ENCODE measurements at regions of chr1 and their contacts with region 1.

Region 1: DNA sequence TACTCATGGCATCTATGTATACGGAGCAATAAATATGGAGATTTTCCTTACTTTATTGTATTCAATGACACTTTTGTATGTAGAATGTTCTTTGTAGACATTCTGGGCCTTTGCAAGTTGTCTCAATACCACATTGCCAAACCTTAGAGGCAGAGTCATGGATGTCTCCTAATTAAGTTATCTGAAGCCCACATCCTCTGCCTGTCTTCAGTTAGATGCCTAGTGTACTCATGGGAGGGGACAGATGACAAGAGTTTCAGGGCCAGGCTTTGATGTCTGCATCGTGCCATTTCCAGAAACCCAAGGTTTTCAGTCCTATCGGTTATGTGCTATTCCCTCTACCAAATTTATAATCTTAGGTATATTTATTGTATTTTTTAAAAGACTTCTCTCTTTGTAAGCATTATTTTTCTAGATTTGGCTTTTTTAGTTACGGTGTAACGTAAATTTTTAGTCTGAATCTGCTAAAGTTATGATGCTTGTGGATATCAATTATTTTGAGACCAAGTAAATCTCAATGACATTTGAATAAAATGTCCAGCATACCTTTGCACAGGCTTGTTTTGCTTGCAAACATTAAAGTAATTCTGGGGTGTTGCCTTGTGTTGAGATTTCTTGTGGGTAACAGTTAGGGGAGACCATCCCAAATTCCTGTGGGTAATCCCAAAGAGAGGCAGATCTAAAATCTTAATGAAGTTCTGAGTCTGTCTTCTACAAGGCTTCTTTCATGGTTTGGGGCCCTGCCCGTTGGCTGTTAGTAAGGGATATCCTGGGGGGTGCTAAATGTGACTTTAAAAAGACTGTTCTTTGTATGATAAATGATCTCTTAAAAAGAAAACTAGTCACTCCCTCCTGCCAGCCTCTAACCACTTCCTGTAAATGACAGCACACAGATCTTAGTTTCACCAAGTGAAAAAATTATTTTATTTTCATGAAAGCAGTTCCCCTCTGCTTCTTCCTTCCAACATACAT is 8.0 kb upstream of the MACF1 start:
- DNase-seq: no peak
- ATAC-seq: no peak
- H3K4me3 Mint-ChIP-seq: no peak overlapping the region
- H3K27ac Mint-ChIP-seq: 0 out of 2 replicates have a peak overlapping the region, but pooled peaks have one; percentile 49
- H3K4me1 Mint-ChIP-seq: peaks cover 46% of the 10 kb centered on the region
- H3K27me3 Mint-ChIP-seq: no peaks in the 10 kb centered on the region
- CTCF ChIP-seq: no peak

Region 2: GRCh38 chr1:38919130-38919529 is 277.4 kb before region 1 on chr1:
- CTCF ChIA-PET with region 1: no interaction called
- POLR2A ChIA-PET with region 1: no interaction called
- DNase-seq: no peak
- ATAC-seq: no peak
- H3K4me3 Mint-ChIP-seq: no peak overlapping the region
- H3K27ac Mint-ChIP-seq: no peak overlapping the region
- H3K4me1 Mint-ChIP-seq: peaks cover 4% of the 10 kb centered on the region
- H3K27me3 Mint-ChIP-seq: no peaks in the 10 kb centered on the region
- CTCF ChIP-seq: no peak

Region 3: GRCh38 chr1:38990738-38991639 is 205.5 kb before region 1 on chr1 and contains the start of gene AKIRIN1:
- CTCF ChIA-PET with region 1: interaction called, 3 read pairs
- POLR2A ChIA-PET with region 1: interaction called, 12 read pairs
- DNase-seq: peak; percentile 100
- ATAC-seq: peak; percentile 84
- H3K4me3 Mint-ChIP-seq: peak within 1 kb of the TSS; percentile 92
- H3K27ac Mint-ChIP-seq: peak within 1 kb of the TSS; percentile 95
- H3K4me1 Mint-ChIP-seq: peaks cover 54% of the 10 kb centered on the region
- H3K27me3 Mint-ChIP-seq: no peaks in the 10 kb centered on the region
- CTCF ChIP-seq: no peak
- total RNA-seq, gene AKIRIN1: 183 to 214 TPM (median 212 TPM) in 3 replicates

Region 4: DNA sequence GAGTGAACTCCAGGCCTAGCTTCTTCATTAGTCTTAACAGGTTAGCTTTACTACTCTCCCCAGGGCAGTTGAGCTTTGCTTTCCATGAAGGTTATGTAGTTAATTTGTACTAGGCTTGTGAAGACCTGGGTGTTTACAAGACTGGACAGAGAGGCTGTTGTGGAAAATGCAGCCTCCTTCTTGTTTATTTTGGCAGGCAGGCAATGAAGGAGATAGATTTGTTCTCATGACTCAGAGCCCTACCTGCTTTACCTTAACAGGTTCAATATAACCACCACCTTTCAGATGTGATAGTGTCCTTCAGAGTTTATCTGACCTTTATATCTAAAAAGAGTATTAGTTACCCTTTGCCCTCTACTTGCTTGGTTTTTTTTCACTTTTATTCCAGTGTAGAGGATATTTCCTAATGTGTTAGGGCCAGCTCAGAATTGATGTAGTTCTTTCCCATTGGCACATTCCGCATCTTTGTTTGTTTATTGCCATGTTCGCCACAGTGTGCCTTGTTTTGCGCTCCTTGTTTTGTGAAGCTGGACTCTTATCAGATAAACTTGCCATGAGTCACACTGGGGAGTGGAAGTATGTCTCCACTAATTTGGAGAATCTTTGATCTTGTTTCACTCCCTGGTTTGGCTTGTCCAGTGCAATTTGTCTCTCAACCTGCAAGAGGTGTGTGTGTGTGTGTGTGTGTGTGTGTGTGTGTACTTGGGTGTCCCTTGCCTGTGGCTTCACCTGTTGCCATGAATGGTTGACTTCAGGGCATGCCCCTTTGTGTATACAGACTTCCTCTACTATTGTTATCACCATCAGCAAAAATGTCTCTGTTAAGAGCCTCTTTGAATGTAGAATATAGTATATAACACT is 79.4 kb before region 1 on chr1:
- CTCF ChIA-PET with region 1: interaction called, 90 read pairs
- POLR2A ChIA-PET with region 1: interaction called, 3 read pairs
- DNase-seq: no peak
- ATAC-seq: no peak
- H3K4me3 Mint-ChIP-seq: no peak overlapping the region
- H3K27ac Mint-ChIP-seq: peak overlapping the region; percentile 49
- H3K4me1 Mint-ChIP-seq: peaks cover 8% of the 10 kb centered on the region
- H3K27me3 Mint-ChIP-seq: no peaks in the 10 kb centered on the region
- CTCF ChIP-seq: no peak

Region 5: GRCh38 chr1:39165049-39165448 is 31.5 kb before region 1 on chr1:
- CTCF ChIA-PET with region 1: interaction called, 72 read pairs
- POLR2A ChIA-PET with region 1: interaction called, 3 read pairs
- DNase-seq: no peak
- ATAC-seq: peak; percentile 52
- H3K4me3 Mint-ChIP-seq: no peak overlapping the region
- H3K27ac Mint-ChIP-seq: peak overlapping the region; percentile 42
- H3K4me1 Mint-ChIP-seq: peaks cover 74% of the 10 kb centered on the region
- H3K27me3 Mint-ChIP-seq: no peaks in the 10 kb centered on the region
- CTCF ChIP-seq: no peak

Region 6: GRCh38 chr1:39214998-39215873 is 18.7 kb after region 1 on chr1:
- CTCF ChIA-PET with region 1: interaction called, 55 read pairs
- POLR2A ChIA-PET with region 1: no interaction called
- DNase-seq: no peak
- ATAC-seq: peak; percentile 59
- H3K4me3 Mint-ChIP-seq: no peak overlapping the region
- H3K27ac Mint-ChIP-seq: peak overlapping the region; percentile 68
- H3K4me1 Mint-ChIP-seq: peaks cover 46% of the 10 kb centered on the region
- H3K27me3 Mint-ChIP-seq: no peaks in the 10 kb centered on the region
- CTCF ChIP-seq: no peak

Region 7: GRCh38 chr1:39230261-39231190 is 34.0 kb after region 1 on chr1:
- CTCF ChIA-PET with region 1: interaction called, 33 read pairs
- POLR2A ChIA-PET with region 1: no interaction called
- DNase-seq: no peak
- ATAC-seq: peak; percentile 90
- H3K4me3 Mint-ChIP-seq: peak overlapping the region; percentile 37
- H3K27ac Mint-ChIP-seq: peak overlapping the region; percentile 80
- H3K4me1 Mint-ChIP-seq: peaks cover 44% of the 10 kb centered on the region
- H3K27me3 Mint-ChIP-seq: no peaks in the 10 kb centered on the region
- CTCF ChIP-seq: no peak

Region 8: DNA sequence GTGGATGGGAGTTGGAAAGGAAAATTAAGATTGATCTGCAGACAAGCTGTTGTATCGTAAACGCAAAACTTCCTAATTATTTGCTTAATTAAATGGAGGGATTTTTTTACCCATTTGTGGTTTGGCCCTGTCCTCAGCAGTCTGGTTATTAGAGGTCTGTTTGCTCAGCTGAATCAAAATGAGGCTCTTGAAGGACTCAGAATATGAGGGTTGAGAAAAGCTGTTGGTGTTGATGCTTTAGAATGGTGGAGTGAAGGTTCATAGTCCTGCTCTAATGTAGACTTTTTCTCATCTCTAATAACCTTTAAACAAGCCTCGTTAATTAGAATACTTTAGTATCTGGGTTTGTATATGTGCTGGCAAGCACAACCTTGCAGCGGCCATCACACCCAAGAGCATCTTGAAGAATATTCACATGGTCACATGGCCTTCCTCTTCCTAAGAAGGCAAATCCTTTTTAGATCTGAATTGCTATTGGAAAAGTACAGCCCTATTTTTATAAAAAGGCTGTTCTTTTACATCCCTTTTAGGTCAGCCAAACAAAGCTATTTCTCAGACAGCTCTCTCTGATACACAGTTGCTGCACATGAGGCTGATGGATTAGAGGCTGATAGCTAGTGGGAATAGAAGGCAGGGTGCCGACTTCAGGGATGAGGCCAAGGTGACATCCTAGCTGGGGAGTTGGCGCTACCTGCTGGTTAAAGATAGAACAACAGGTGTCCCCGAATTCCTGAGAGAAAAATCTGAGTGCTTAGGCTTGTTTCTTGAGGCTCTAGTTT is 61.8 kb after region 1 on chr1:
- CTCF ChIA-PET with region 1: interaction called, 141 read pairs
- POLR2A ChIA-PET with region 1: interaction called, 4 read pairs
- DNase-seq: peak; percentile 82
- ATAC-seq: peak; percentile 90
- H3K4me3 Mint-ChIP-seq: no peak overlapping the region
- H3K27ac Mint-ChIP-seq: peak overlapping the region; percentile 91
- H3K4me1 Mint-ChIP-seq: peaks cover 14% of the 10 kb centered on the region
- H3K27me3 Mint-ChIP-seq: no peaks in the 10 kb centered on the region
- CTCF ChIP-seq: peak; percentile 86

Region 9: DNA sequence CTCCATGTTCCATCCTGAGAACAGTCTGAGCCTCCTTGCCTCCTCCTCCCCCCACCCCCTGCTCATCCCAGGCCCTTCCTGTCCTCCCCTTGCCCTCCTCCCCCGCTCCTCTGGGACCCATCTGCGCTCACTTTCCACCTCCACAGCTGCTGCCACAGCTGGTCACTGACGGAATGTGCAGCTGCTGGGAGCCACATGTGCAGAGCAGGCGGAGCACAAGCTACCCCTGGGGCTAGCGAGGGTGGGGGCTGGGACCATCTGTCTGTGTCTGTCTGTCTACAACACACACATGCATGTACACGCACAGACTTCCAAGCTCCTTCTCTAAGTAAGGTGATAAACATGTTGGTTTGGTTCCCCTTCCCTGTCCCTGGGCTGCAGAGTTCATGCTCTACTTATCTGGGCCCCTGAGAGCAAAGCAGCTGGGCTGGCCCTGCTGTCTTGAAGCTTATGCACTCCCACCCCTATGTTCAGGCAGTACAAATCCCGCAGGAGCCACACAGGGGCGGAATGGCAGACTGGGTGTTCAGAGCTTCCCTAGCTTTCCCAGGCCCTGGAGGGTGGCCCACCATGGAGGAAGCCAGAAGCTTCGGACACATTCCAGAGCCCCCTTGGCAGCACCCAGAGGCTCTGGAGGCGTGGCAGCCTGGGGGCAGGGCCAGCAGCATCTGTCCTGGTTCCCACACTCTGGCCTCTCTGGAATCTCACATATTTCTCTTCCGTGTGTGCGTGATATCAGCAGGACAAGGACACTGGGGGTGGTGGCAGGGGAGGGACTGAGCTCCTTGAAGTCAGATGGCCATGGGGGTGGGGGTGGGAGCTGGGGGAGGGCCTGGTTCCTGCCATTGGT is 449.9 kb after region 1 on chr1:
- CTCF ChIA-PET with region 1: no interaction called
- POLR2A ChIA-PET with region 1: no interaction called
- DNase-seq: peak; percentile 68
- ATAC-seq: peak; percentile 84
- H3K4me3 Mint-ChIP-seq: no peak overlapping the region
- H3K27ac Mint-ChIP-seq: no peak overlapping the region
- H3K4me1 Mint-ChIP-seq: peaks cover 14% of the 10 kb centered on the region
- H3K27me3 Mint-ChIP-seq: peaks cover 80% of the 10 kb centered on the region
- CTCF ChIP-seq: no peak